CD4-positive, alpha-beta T cell (primary cell): ENCODE measurements at regions of chr11 and their contacts with region 1.

Region 1: DNA sequence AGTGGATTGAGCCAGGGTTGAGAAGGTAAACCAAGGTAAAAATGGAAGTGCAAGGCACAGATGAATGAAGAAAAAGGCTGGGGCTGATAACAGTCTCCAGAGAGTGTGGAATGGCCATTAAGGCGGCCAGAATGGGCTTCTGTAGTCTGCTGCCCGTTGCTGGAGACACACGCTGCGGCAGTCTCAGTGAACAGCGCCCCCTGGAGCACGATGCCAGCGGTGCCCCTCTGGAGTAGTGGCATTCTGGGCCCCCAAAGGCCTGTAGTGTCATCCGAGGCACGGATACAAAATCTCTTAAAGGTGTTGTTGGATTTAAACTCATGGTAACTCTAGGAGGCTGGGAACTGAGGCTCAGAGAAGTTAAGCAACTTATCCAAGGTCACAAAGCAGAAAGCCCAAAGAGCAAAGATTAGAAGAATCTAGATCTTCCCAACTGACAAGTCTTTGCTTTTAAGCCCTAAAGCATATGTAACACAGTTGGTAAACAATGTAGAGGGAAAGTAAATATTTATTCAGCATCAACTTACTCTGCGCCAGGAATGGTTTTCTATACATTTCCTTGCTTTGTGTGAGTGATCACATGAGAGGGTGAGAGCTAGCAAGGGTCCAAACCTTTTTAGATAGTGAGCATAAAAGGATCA is 18.2 kb downstream of the KCNJ1 start:
- DNase-seq: peak; percentile 40 to 78 (median 60)
- ATAC-seq: peak; percentile 70
- H3K4me3 ChIP-seq: no peak overlapping the region
- H3K4me3 Mint-ChIP-seq: no peak overlapping the region
- H3K27ac ChIP-seq: no peak overlapping the region
- H3K27ac Mint-ChIP-seq: no peak overlapping the region
- H3K4me1 ChIP-seq: peaks cover 29% of the 10 kb centered on the region
- H3K4me1 Mint-ChIP-seq: peaks cover 43% of the 10 kb centered on the region
- H3K27me3 ChIP-seq: no peaks in the 10 kb centered on the region
- H3K27me3 Mint-ChIP-seq: no peaks in the 10 kb centered on the region
- CTCF ChIP-seq: peak; percentile 69

Region 2: GRCh38 chr11:128279866-128280265 is 569.1 kb before region 1 on chr11:
- CTCF ChIA-PET with region 1: no interaction called
- POLR2A ChIA-PET with region 1: no interaction called
- intact Hi-C with region 1: loop called (anchors 5 to 10 kb)
- DNase-seq: no peak
- ATAC-seq: no peak
- H3K4me3 ChIP-seq: no peak overlapping the region
- H3K4me3 Mint-ChIP-seq: no peak overlapping the region
- H3K27ac ChIP-seq: no peak overlapping the region
- H3K27ac Mint-ChIP-seq: no peak overlapping the region
- H3K4me1 ChIP-seq: peaks cover 4% of the 10 kb centered on the region
- H3K4me1 Mint-ChIP-seq: peaks cover 5% of the 10 kb centered on the region
- H3K27me3 ChIP-seq: no peaks in the 10 kb centered on the region
- H3K27me3 Mint-ChIP-seq: no peaks in the 10 kb centered on the region
- CTCF ChIP-seq: no peak

Region 3: DNA sequence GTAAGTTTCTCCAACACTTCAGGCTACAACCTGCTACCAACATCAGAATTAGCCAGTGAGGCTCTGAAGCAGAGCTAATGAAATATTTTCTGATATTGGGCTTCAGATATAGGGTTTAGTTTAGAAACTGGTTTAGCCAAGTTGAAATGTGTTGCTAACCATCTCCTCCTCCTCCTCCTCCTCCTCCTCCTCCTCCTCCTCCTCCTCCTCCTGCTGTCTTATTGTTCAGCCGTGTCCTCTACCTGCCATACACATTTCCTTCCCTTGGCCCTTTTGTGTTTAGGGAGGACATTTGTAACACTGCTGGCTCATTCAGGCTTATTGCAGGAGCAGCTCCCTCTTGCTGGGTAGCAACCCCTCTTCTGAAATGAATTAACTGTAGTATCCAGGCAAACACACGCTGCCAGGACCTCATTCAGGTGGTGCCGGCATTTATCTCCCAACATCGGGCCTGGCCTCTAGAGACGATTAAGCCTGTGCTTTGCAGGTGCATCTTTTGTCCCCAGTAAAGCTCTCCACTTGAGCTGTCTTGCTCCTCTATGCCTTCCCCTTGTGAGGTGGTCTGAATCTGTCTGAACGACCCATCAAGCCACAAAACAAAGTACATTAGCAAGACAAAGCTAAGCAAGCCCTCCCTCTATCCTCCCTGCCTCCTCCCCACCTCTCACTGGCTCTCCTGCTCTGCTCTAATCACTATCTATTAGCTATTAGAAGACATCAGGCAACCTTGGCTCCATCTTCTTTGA is 64.7 kb before region 1 on chr11:
- CTCF ChIA-PET with region 1: interaction called, 6 read pairs
- POLR2A ChIA-PET with region 1: no interaction called
- intact Hi-C with region 1: loop called in 1 of 2 experiments (anchors 5 kb)
- DNase-seq: no peak
- ATAC-seq: no peak
- H3K4me3 ChIP-seq: no peak overlapping the region
- H3K4me3 Mint-ChIP-seq: no peak overlapping the region
- H3K27ac ChIP-seq: peak overlapping the region in 1 of 2 donors; percentile 4
- H3K27ac Mint-ChIP-seq: peak overlapping the region; percentile 68
- H3K4me1 ChIP-seq: peaks cover 30% of the 10 kb centered on the region
- H3K4me1 Mint-ChIP-seq: peaks cover 51% of the 10 kb centered on the region
- H3K27me3 ChIP-seq: no peaks in the 10 kb centered on the region
- H3K27me3 Mint-ChIP-seq: no peaks in the 10 kb centered on the region
- CTCF ChIP-seq: no peak